Activated T-helper 2 cell treated with anti-CD3 and anti-CD28 coated beads, Interferon-gamma antibody, Interleukin-2, Interleukin-4, amounts not matched to agents 10 μg/mL and 5 μg/mL and 100 μg/mL, durations not matched to agents 14 hours and 24 hours and 36 hours (primary cell): ENCODE measurements at regions of chr21 and their contacts with region 1.

Region 1: DNA sequence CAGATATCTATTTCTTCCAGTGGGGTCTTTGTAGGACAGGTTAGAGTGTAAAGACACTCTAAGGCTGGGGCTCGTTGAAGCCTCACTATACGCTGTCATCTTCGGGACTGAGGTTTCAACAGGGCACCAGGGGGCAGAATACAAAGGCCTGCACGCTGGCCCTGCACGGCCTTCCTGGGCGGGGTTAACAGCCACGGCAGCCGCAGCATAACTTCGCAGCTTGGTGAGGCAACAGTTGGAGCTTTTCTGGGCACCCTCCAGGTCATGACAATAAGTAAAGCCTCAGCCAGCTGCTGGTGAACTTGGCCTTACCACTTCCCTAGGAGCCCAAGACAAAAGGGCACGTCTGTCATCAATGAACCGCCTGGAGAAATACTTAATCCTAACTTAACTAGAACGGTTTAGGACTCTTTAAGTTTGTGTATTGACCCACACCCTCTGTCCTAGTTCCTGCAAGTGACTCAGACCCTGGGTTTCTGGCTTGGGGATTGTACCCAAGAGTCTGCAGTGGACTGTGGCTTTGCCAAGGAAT is 2.3 kb upstream of the RUNX1 start:
- DNase-seq: peak; percentile 81
- H3K4me3 Mint-ChIP-seq: peak overlapping the region; percentile 49
- H3K27ac Mint-ChIP-seq: peak overlapping the region; percentile 96
- H3K4me1 Mint-ChIP-seq: peaks cover 47% of the 10 kb centered on the region
- H3K27me3 Mint-ChIP-seq: no peaks in the 10 kb centered on the region

Region 2: GRCh38 chr21:34888569-34889319 is 162.6 kb before region 1 on chr21:
- intact Hi-C with region 1: loop called (anchors 1 kb)
- DNase-seq: peak; percentile 81
- H3K4me3 Mint-ChIP-seq: peak overlapping the region; percentile 98
- H3K27ac Mint-ChIP-seq: peak overlapping the region; percentile 100
- H3K4me1 Mint-ChIP-seq: peaks cover 36% of the 10 kb centered on the region
- H3K27me3 Mint-ChIP-seq: no peaks in the 10 kb centered on the region

Region 3: GRCh38 chr21:34986561-34987500 is 64.5 kb before region 1 on chr21:
- intact Hi-C with region 1: loop called (anchors 1 kb)
- DNase-seq: peak; percentile 66
- H3K4me3 Mint-ChIP-seq: peak overlapping the region; percentile 75
- H3K27ac Mint-ChIP-seq: peak overlapping the region; percentile 94
- H3K4me1 Mint-ChIP-seq: peaks cover 87% of the 10 kb centered on the region
- H3K27me3 Mint-ChIP-seq: no peaks in the 10 kb centered on the region

Region 4: DNA sequence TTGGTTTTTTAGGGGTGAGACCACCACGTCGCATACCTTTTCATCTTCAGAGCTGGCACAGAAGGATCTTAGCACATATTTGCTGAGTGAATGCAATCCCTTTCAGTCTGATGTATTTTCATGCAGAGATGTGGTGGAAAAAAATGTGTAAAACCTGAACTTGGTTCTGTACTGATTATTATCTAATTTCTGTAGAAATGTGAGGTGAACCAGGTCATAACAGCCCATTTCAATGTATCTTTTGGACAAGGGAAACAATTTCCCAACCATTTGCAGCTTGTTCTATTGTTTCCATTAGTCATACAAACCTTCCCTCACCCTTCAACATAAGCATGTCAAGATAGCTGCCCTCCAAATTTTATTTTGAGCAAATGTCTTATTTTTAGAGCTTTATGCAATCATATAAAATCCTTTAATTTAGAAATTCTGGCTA is 44.5 kb after region 1 on chr21:
- intact Hi-C with region 1: loop called (anchors 1 kb)
- DNase-seq: no peak
- H3K4me3 Mint-ChIP-seq: no peak overlapping the region
- H3K27ac Mint-ChIP-seq: peak overlapping the region; percentile 93
- H3K4me1 Mint-ChIP-seq: peaks cover 65% of the 10 kb centered on the region
- H3K27me3 Mint-ChIP-seq: no peaks in the 10 kb centered on the region

Region 5: DNA sequence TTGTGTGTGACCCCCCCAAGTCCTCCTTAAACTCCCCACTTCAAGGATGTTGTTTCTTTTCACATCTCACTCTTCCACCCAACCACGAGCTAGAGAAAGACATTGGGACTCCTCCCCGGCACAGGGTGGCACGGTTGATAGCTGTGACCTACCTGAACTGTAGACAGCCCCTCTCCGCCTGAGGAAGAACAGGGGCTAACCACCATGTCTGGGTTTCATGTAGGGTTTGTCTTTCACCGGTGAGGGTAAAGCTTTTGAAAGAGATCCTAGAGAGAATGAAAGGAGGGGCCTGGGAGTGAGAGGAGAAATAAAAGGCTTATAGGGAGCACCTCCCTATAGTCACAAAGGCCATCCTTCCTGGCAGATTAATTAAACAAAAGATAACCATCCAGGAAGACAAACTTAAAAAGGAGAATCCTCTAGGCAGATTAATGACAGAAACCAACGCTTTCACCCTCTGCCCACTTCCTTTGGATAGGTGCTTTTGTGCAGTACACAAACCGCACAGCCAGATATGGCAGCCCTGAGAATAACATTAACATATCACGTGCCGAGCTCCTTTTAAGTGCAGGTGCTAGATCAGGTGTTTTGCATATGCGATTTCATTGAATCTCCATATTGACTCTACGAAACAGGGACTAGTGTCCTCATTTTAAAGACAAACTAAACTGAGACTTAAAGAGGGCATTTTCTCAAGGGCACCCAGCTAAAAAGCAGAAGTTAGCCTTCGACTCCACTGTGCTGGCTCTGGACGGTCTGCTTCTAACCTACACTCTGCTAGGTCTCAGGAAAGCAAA is 175.8 kb after region 1 on chr21:
- intact Hi-C with region 1: loop called (anchors 1 kb)
- DNase-seq: peak; percentile 52
- H3K4me3 Mint-ChIP-seq: peak overlapping the region; percentile 37
- H3K27ac Mint-ChIP-seq: peak overlapping the region; percentile 72
- H3K4me1 Mint-ChIP-seq: peaks cover 52% of the 10 kb centered on the region
- H3K27me3 Mint-ChIP-seq: no peaks in the 10 kb centered on the region

Region 6: GRCh38 chr21:35528116-35529042 is 477.0 kb after region 1 on chr21:
- intact Hi-C with region 1: loop called (anchors 10 kb)
- DNase-seq: peak; percentile 26
- H3K4me3 Mint-ChIP-seq: peak overlapping the region; percentile 85
- H3K27ac Mint-ChIP-seq: peak overlapping the region; percentile 95
- H3K4me1 Mint-ChIP-seq: peaks cover 53% of the 10 kb centered on the region
- H3K27me3 Mint-ChIP-seq: no peaks in the 10 kb centered on the region